HEK293T (cell line): ENCODE measurements at regions of chr3 and their contacts with region 1.

Region 1: GRCh38 chr3:123028233-123028828 is 768 bp upstream of the SEMA5B start:
- DNase-seq: peak; percentile 81

Region 2: DNA sequence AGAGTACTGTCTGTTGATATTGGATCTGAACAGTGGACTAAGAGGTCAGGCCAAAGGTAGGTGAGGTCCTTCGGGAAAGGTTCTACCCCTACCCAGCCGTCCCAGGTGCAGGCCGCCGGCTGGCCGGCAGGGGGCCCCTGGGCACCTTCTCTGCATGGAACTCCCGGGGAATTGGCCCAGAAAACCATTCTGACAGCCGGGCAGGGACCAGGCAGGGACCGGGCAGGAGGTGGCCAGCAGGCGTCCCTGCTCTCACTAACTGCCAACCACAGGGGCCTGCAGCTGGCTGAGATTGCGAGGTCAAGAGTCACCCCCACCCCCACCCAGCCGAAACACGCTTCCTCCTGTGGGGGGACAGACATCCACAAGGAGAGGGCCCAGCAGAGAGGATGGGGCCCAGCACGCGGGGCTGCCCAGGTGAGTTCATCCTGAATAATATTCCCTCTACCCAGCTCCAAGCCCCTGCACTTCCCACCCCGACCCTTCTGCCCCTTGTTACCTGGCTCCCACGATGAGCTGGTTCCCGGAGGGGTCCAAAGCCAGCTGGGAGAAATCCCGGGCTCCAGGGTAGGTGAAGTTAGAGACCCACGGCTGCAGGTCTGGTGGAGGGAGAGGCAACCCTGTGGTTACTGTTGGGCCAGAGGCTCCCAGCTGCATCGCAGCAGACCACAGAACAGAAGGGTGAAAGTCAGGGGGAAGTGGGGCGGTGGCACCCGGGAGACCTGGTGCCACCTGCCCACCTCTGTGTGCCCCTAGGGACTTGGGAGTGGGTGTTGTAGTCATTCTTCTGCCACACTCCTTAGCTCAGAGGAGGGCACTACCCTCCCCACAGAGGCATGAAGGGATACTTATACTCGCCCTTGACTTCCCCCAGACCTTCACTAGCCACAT is 85.1 kb before region 1 on chr3:
- CTCF ChIA-PET with region 1: interaction called, 29 read pairs
- POLR2A ChIA-PET with region 1: interaction called, 4 read pairs
- DNase-seq: peak; percentile 85

Region 3: GRCh38 chr3:122996038-122996580 is 32.2 kb before region 1 on chr3:
- CTCF ChIA-PET with region 1: no interaction called
- POLR2A ChIA-PET with region 1: no interaction called
- DNase-seq: no peak

Region 4: GRCh38 chr3:123072152-123072551 is 43.8 kb after region 1 on chr3:
- CTCF ChIA-PET with region 1: no interaction called
- POLR2A ChIA-PET with region 1: no interaction called
- DNase-seq: no peak